HEK293 (cell line): ENCODE measurements at regions of chr18 and their contacts with region 1.

Region 1: GRCh38 chr18:63422087-63422809 is at the start of gene VPS4B:
- H3K4me3 ChIP-seq: peak within 1 kb of the TSS; percentile 69
- H3K27ac ChIP-seq: peak within 1 kb of the TSS; percentile 88
- H3K4me1 ChIP-seq: no peaks in the 10 kb centered on the region; the same call in 1 of the 2 replicates
- CTCF ChIP-seq: no peak

Region 2: GRCh38 chr18:63367053-63367953 is 54.9 kb before region 1 on chr18 and contains the start of gene KDSR:
- CTCF ChIA-PET with region 1: interaction called, 3 read pairs
- POLR2A ChIA-PET with region 1: interaction called, 29 read pairs
- H3K4me3 ChIP-seq: peak within 1 kb of the TSS; percentile 74
- H3K27ac ChIP-seq: peak within 1 kb of the TSS; percentile 95
- H3K4me1 ChIP-seq: peaks cover 7% of the 10 kb centered on the region; the same call in 1 of the 2 replicates
- CTCF ChIP-seq: peak; percentile 53

Region 3: DNA sequence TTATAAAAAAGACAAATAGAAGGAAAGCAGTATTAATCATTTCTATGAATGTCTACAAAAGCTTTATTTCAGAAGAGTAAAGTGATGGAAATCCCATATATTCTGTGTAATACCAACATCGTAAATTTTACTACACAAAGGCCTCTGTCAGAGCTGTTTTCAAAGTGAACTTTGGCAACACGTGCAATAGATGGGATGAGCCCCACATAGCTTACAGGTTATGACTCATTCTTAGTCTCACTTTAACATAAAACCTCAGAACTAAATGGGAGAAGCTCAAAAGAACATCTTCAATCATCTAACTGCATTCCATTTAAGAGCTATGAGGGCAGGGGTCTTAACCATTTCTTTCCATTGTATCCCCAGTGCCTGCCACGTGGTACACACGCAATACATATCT is 11.5 kb before region 1 on chr18:
- CTCF ChIA-PET with region 1: interaction called, 4 read pairs
- POLR2A ChIA-PET with region 1: interaction called, 14 read pairs
- H3K4me3 ChIP-seq: no peak overlapping the region
- H3K27ac ChIP-seq: no peak overlapping the region
- H3K4me1 ChIP-seq: no peaks in the 10 kb centered on the region
- CTCF ChIP-seq: no peak